Panc1 (cell line): ENCODE measurements at regions of chr15 and their contacts with region 1.

Region 1: GRCh38 chr15:91789136-91789535 is 64.4 kb upstream of the SLCO3A1 start:
- DNase-seq: no peak
- ATAC-seq: no peak
- H3K4me3 ChIP-seq: no peak overlapping the region
- H3K27ac ChIP-seq: no peak overlapping the region
- H3K4me1 ChIP-seq: no peaks in the 10 kb centered on the region
- H3K27me3 ChIP-seq: no peaks in the 10 kb centered on the region
- CTCF ChIP-seq: no peak

Region 2: GRCh38 chr15:91752081-91752785 is 36.9 kb before region 1 on chr15:
- CTCF ChIA-PET with region 1: interaction called, 11 read pairs
- POLR2A ChIA-PET with region 1: no interaction called
- in situ Hi-C with region 1: no loop called
- intact Hi-C with region 1: no loop called
- DNase-seq: no peak
- ATAC-seq: no peak
- H3K4me3 ChIP-seq: no peak overlapping the region
- H3K27ac ChIP-seq: no peak overlapping the region
- H3K4me1 ChIP-seq: no peaks in the 10 kb centered on the region
- H3K27me3 ChIP-seq: no peaks in the 10 kb centered on the region
- CTCF ChIP-seq: no peak